HepG2 (cell line): ENCODE measurements at regions of chr15 and their contacts with region 1.

Region 1: DNA sequence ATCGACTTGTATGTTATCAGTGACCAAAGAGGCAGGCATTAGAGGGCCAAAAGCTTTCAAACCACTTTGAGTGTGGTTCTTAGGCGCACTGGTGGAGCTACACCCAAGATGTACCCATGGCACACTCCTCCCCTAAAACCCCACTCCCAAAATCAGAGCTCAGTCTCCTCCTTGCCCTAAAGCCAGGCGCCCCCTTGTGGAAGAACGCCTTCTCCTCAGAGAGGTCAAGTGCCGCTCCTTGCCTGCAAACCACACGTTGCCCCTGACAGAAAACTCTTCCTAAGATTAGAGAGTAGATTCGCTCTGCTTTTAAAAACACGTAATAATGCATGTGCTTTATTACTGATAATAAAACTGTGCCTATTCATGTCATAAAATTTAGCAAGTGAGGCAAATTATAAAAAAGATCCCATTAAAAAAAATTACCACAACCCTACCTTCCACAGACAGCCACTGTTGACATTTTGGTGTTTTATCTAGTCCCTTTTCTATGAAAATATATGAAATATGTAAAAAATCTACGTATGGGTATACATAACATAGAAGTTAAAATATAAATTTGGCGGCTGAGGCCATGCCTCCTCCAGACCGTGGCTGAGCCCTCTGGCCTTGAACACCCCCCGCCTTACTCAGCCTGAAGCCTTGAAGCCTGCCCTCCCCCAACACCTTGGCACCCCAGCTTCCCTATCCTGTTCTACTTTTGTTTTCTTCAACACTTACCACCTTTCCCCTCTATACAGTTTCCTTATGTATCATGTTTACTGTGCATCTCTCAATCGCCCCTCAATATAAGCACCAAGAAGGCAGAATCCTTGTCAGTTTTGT is 33.5 kb downstream of the BCL2L10 start:
- DNase-seq: peak; percentile 59
- ATAC-seq: peak; percentile 77
- H3K4me3 ChIP-seq: peak overlapping the region; percentile 43 to 67 (median 45); a peak in 5 of 6 replicates
- H3K27ac ChIP-seq: peak overlapping the region; percentile 46
- H3K4me1 ChIP-seq: peaks cover 36% of the 10 kb centered on the region
- H3K27me3 ChIP-seq: no peaks in the 10 kb centered on the region; a peak in 1 of 5 replicates
- CTCF ChIP-seq: peak; percentile 90
- EP300 ChIP-seq: no peak
- POLR2A ChIP-seq: no peak
- RAD21 ChIP-seq: peak; percentile 74

Region 2: DNA sequence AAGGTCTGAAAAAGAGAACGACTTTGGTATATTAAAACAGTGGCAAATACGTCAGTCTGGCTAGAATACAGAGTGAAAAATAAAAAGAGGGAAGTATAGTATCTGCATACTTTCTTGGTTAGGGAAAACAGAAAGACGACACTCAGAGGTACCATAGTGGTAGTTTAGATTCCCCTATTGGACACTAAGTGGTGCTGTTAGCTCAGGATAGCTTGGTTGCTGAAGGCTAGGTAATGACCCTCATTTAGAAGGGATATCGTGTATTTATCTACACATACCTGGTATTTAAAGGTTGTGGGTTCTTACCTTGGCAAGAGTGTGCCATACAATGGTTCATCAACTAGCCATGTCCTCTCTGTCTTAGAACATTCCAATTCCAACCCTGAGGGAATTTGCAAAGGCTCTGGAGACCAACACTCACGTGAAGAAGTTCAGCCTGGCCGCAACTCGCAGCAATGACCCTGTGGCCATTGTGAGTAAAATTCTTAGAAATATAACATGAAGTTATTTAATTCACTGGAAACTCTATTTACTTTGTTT is 296.7 kb before region 1 on chr15:
- CTCF ChIA-PET with region 1: no interaction called
- POLR2A ChIA-PET with region 1: no interaction called
- in situ Hi-C with region 1: no loop called
- intact Hi-C with region 1: loop called (anchors 5 kb)
- DNase-seq: no peak
- ATAC-seq: peak; percentile 47; the same call in 1 of the 3 replicates
- H3K4me3 ChIP-seq: no peak overlapping the region
- H3K27ac ChIP-seq: no peak overlapping the region
- H3K4me1 ChIP-seq: peaks cover 7% of the 10 kb centered on the region
- H3K27me3 ChIP-seq: no peaks in the 10 kb centered on the region; a peak in 1 of 5 replicates
- CTCF ChIP-seq: peak; percentile 76
- EP300 ChIP-seq: no peak
- POLR2A ChIP-seq: no peak
- RAD21 ChIP-seq: no peak

Region 3: GRCh38 chr15:51971375-51972133 is 107.5 kb before region 1 on chr15 and contains the start of gene LEO1:
- CTCF ChIA-PET with region 1: no interaction called
- POLR2A ChIA-PET with region 1: interaction called, 14 read pairs
- in situ Hi-C with region 1: no loop called
- intact Hi-C with region 1: no loop called
- DNase-seq: peak; percentile 96
- ATAC-seq: peak; percentile 89
- H3K4me3 ChIP-seq: peak within 1 kb of the TSS; percentile 70 to 100 (median 97)
- H3K27ac ChIP-seq: peak within 1 kb of the TSS; percentile 79
- H3K4me1 ChIP-seq: peaks cover 41% of the 10 kb centered on the region
- H3K27me3 ChIP-seq: no peaks in the 10 kb centered on the region; a peak in 1 of 5 replicates
- CTCF ChIP-seq: peak; percentile 64
- EP300 ChIP-seq: no peak
- POLR2A ChIP-seq: peak; percentile 76 to 77; a peak in 3 of 4 replicates
- RAD21 ChIP-seq: no peak
- total RNA-seq, gene LEO1: 60.3 and 103 TPM in 2 replicates

Region 4: GRCh38 chr15:52018693-52019387 is 60.2 kb before region 1 on chr15 and contains the start of gene MAPK6:
- CTCF ChIA-PET with region 1: no interaction called
- POLR2A ChIA-PET with region 1: interaction called, 16 read pairs
- in situ Hi-C with region 1: no loop called
- intact Hi-C with region 1: loop called (anchors 2 kb)
- DNase-seq: peak; percentile 80
- ATAC-seq: peak; percentile 68
- H3K4me3 ChIP-seq: peak within 1 kb of the TSS; percentile 62 to 99 (median 77)
- H3K27ac ChIP-seq: peak within 1 kb of the TSS; percentile 99
- H3K4me1 ChIP-seq: peaks cover 38% of the 10 kb centered on the region
- H3K27me3 ChIP-seq: no peaks in the 10 kb centered on the region; a peak in 1 of 5 replicates
- CTCF ChIP-seq: 0 out of 2 replicates have a peak, but pooled peaks have one; percentile 11
- EP300 ChIP-seq: peak; percentile 11 to 23; a peak in 1 of 4 replicates
- POLR2A ChIP-seq: peak; percentile 81 to 87
- RAD21 ChIP-seq: peak; percentile 49; the same call in 1 of the 2 replicates
- total RNA-seq, gene MAPK6: 99.7 and 188 TPM in 2 replicates

Region 5: GRCh38 chr15:52057996-52058395 is 21.1 kb before region 1 on chr15:
- CTCF ChIA-PET with region 1: no interaction called
- POLR2A ChIA-PET with region 1: no interaction called
- in situ Hi-C with region 1: no loop called
- intact Hi-C with region 1: no loop called
- DNase-seq: no peak
- ATAC-seq: no peak
- H3K4me3 ChIP-seq: no peak overlapping the region
- H3K27ac ChIP-seq: no peak overlapping the region
- H3K4me1 ChIP-seq: peaks cover 27% of the 10 kb centered on the region
- H3K27me3 ChIP-seq: no peaks in the 10 kb centered on the region
- CTCF ChIP-seq: no peak
- EP300 ChIP-seq: no peak
- POLR2A ChIP-seq: no peak
- RAD21 ChIP-seq: no peak

Region 6: DNA sequence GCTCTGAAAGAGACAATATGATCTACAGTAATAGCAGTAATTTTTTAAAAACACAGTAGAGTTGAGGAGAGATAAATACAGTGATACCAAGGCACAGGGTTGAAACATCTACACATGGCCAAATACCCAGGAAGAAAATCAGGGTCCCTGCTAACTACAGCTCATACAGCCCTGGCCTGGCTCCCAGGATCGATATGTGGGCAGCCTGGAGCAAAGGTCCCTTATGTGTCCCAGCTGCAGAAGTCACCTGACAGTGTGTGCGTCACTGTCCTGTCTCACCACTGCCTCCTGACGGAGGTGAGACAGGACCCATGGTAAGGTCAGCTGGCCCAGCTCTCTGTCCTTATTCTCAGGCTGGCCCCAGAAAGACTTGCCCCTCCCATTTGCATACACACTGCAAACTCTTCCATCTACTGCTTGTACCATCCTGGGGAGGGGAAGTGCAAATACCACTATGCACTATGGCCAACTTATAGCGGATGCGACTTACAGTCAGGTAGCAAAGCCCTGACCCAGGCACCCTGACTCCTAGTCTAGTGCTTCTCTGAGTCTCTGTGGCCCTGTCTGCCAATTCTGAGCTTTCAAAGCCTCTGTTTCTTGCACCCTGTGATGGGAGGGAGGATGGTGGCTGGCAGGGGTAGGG is 55.5 kb after region 1 on chr15:
- CTCF ChIA-PET with region 1: interaction called, 6 read pairs
- POLR2A ChIA-PET with region 1: interaction called, 3 read pairs
- in situ Hi-C with region 1: loop called (anchors 5 kb)
- intact Hi-C with region 1: loop called (anchors 2 kb)
- DNase-seq: peak; percentile 93
- ATAC-seq: peak; percentile 94
- H3K4me3 ChIP-seq: peak overlapping the region in 1 of 3 experiments; percentile 2; a peak in 1 of 6 replicates
- H3K27ac ChIP-seq: peak overlapping the region; percentile 67
- H3K4me1 ChIP-seq: peaks cover 66% of the 10 kb centered on the region
- H3K27me3 ChIP-seq: no peaks in the 10 kb centered on the region
- CTCF ChIP-seq: peak; percentile 93
- EP300 ChIP-seq: peak; percentile 73 to 77
- POLR2A ChIP-seq: peak; percentile 53 to 65; a peak in 2 of 4 replicates
- RAD21 ChIP-seq: peak; percentile 74; the same call in 1 of the 2 replicates

Region 7: GRCh38 chr15:52139599-52140491 is 60.8 kb after region 1 on chr15:
- CTCF ChIA-PET with region 1: interaction called, 6 read pairs
- POLR2A ChIA-PET with region 1: interaction called, 3 read pairs
- in situ Hi-C with region 1: loop called (anchors 5 kb)
- intact Hi-C with region 1: loop called (anchors 2 kb)
- DNase-seq: peak; percentile 60
- ATAC-seq: peak; percentile 50
- H3K4me3 ChIP-seq: no peak overlapping the region
- H3K27ac ChIP-seq: peak overlapping the region; percentile 5
- H3K4me1 ChIP-seq: peaks cover 65% of the 10 kb centered on the region
- H3K27me3 ChIP-seq: no peaks in the 10 kb centered on the region
- CTCF ChIP-seq: peak; percentile 90
- EP300 ChIP-seq: no peak
- POLR2A ChIP-seq: no peak
- RAD21 ChIP-seq: peak; percentile 82

Region 8: GRCh38 chr15:52179278-52180195 is 100.4 kb after region 1 on chr15:
- CTCF ChIA-PET with region 1: no interaction called
- POLR2A ChIA-PET with region 1: no interaction called
- in situ Hi-C with region 1: no loop called
- intact Hi-C with region 1: no loop called
- DNase-seq: peak; percentile 57
- ATAC-seq: peak; percentile 85
- H3K4me3 ChIP-seq: peak overlapping the region; percentile 66 to 80 (median 76)
- H3K27ac ChIP-seq: no peak overlapping the region
- H3K4me1 ChIP-seq: peaks cover 54% of the 10 kb centered on the region
- H3K27me3 ChIP-seq: 0 out of 5 replicates have a peak, but pooled peaks cover 0 to 4% of the 10 kb centered on the region in 2 experiments
- CTCF ChIP-seq: no peak
- EP300 ChIP-seq: no peak
- POLR2A ChIP-seq: peak; percentile 38 to 65; a peak in 3 of 4 replicates
- RAD21 ChIP-seq: no peak